Left cardiac atrium (tissue), 4 donors: ENCODE measurements at regions of chr9 and their contacts with region 1.

Region 1: DNA sequence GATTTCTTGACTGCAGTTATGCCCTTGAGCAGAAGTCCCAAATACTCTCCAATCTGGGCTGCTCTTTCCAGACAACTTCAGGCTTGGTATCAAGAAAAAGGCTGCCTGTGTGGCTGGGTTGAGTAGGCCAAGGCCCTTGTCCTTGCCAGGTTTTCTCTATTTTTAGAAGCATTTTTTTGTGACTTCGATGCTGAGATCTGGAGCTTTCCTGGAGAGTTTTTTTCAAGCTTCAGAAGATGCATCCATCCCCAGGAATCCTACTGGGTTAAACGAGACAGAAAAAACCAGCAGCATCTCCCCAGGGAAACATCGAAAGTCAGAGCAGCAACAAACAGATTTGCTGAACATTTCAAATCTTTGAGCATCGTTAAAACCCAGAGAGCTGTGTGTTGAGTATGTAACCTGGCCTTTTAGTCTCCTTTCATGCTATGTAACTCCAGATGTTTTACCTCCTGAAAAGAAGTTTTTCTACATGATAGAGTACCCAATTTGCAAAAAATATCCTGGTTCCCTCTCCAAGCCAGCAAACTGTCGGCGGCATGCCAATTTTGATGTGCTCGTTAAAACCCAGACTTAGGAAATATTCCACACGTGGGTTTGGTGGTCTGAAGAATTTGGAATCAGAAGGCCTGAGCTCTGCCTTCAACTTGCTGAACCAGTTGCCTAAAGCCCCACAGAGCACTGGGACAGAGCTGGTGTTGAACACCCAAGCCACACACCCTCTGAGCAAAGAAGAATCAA is 98.1 kb upstream of the ALDH1B1 start:
- DNase-seq: no peak
- ATAC-seq: peak in 1 of 2 donors; percentile 53

Region 2: GRCh38 chr9:38257626-38258215 is 36.7 kb before region 1 on chr9:
- intact Hi-C with region 1: loop called in 1 of 2 experiments (anchors 5 kb)
- DNase-seq: no peak
- ATAC-seq: no peak

Region 3: GRCh38 chr9:38392235-38393127 is 98.1 kb after region 1 on chr9 and contains the start of gene ALDH1B1:
- intact Hi-C with region 1: no loop called
- DNase-seq: peak; percentile 90
- ATAC-seq: peak; percentile 98 to 99
- total RNA-seq, gene ALDH1B1: 19.4 to 21.0 TPM